ENCODE measurements at regions of chr11 and their contacts with region 1.

Region 1: DNA sequence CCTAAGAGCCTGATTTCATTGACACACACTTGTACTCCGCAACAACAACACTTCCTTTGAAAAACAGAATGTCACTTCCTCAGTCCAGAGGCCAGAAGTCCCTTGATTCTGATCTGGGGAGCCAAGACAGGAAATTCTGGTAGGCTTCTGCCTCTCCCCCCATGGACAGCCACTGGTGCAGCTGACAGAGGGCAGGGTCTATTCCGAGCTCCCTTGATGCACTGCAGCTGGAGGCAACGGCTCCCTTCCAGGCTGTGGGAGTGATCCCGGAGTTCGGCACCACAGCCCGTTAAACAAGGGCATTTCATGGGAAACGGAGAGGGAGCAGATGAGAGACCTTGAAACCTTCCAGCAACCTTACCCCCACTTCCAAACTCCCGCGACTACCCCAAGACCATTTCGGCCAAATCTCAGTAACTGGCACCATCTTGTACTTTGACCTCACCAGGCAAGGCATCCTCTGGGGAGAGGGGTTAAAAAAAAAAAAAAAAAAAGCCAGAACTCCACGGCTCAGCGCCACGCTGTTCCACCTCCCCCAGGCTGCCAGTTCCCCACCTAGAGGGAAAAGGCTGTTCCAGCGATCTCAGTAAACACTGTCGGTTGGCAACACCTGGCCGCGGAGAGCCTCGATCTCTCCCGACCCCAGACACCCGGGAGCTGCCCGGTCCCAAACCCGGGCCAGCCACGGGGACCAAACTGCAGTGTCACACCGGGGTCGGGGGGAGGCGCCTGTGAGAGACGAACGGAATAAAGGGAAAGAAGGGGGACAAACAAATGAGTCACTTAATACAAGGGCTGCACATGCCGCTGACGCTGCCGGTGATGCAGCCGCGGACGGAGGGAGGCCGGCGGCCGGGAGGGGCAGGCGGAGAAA is 1.1 kb downstream of the GAB2 start:
- DNase-seq: peak; percentile 89
- H3K4me3 Mint-ChIP-seq: peak overlapping the region; percentile 80
- H3K27ac Mint-ChIP-seq: peak overlapping the region; percentile 52
- H3K4me1 Mint-ChIP-seq: peaks cover 28% of the 10 kb centered on the region
- H3K27me3 Mint-ChIP-seq: peaks cover 19% of the 10 kb centered on the region

Region 2: DNA sequence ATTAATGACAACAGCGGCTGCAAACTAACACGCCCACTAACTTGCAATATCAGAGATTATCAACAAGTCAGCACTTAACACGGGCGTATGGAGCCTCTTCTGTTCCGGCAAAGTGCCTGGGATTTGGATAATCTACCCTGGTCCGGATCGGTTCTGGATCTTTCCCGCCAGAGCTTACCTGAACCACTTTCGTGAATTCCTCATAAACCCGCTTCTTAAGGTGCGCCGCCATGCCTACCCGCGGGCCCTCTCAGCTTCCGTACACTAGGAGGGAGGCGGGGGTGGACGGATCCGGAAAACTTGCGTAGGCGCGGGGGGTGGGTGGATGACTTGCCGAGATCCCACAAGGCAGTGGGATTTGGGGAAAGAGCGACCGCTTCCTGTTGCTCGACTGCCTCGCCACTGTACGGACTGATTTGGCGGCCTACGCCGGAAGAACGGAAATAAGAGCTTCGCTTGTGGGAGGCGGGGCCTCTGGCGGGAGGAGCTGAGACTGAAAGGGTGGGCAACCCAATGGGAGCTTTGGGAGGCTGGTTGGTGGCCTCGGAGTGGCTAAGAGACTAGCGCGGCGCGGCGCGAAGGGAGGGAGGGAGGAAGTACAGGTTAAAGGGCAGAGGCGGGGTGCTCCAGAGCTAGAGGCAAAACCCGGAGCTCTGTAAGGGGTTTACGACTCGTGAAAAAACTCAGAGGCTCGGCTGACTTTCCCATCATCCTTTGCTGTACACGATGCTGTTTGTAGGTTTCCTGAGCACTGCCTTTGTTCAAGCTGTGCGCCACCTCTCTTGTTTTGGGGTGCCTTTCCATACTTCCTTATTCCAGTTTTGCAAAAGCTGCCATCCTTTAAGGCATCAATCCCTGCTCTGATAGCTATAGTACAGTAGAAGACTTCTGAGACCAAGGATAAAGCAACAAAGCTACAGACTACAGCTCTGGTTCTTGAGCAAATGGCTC is 421.9 kb before region 1 on chr11 and contains the start of gene INTS4:
- CTCF ChIA-PET with region 1: interaction called, 3 read pairs
- POLR2A ChIA-PET with region 1: interaction called, 3 read pairs
- intact Hi-C with region 1: loop called (anchors 5 kb)
- DNase-seq: peak; percentile 99
- H3K4me3 Mint-ChIP-seq: peak within 1 kb of the TSS; percentile 89
- H3K27ac Mint-ChIP-seq: peak within 1 kb of the TSS; percentile 93
- H3K4me1 Mint-ChIP-seq: peaks cover 27% of the 10 kb centered on the region
- H3K27me3 Mint-ChIP-seq: no peaks in the 10 kb centered on the region
- total RNA-seq, gene INTS4: 53.5 to 55.3 TPM

Region 3: GRCh38 chr11:78139422-78140391 is 276.8 kb before region 1 on chr11 and contains the start of gene ALG8:
- CTCF ChIA-PET with region 1: interaction called, 8 read pairs
- POLR2A ChIA-PET with region 1: no interaction called
- intact Hi-C with region 1: loop called (anchors 5 kb)
- DNase-seq: peak; percentile 98
- H3K4me3 Mint-ChIP-seq: peak within 1 kb of the TSS; percentile 81
- H3K27ac Mint-ChIP-seq: peak within 1 kb of the TSS; percentile 93
- H3K4me1 Mint-ChIP-seq: peaks cover 34% of the 10 kb centered on the region
- H3K27me3 Mint-ChIP-seq: no peaks in the 10 kb centered on the region
- total RNA-seq, gene ALG8: 45.8 to 45.9 TPM

Region 4: GRCh38 chr11:78228467-78228866 is 188.1 kb before region 1 on chr11:
- CTCF ChIA-PET with region 1: interaction called, 13 read pairs
- POLR2A ChIA-PET with region 1: no interaction called
- intact Hi-C with region 1: loop called (anchors 2 kb)
- DNase-seq: peak; percentile 20
- H3K4me3 Mint-ChIP-seq: no peak overlapping the region
- H3K27ac Mint-ChIP-seq: no peak overlapping the region
- H3K4me1 Mint-ChIP-seq: peaks cover 15% of the 10 kb centered on the region
- H3K27me3 Mint-ChIP-seq: no peaks in the 10 kb centered on the region

Region 5: DNA sequence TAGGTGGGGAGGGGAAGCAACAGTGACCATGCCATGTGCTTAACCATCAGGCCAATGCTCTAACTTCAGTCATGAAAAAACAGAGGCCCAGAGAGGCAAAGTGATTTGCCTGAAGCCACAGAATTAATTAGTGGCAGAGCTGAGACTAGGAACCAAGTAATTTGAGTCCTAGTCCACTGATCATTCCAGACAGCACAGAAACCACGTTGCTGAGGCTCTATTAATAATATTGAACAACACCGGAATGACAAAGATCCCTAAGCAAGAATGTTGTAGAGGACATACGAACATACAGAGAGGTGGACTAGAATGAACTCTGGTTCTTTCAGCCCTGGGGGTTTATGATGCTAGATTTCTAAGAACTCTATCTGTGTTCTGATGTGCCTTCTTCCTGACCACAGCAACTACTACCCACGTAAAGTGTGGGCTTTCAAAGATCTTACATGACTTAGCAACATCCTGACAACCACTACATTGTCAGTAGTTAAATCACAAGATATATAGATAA is 91.2 kb before region 1 on chr11:
- CTCF ChIA-PET with region 1: no interaction called
- POLR2A ChIA-PET with region 1: no interaction called
- intact Hi-C with region 1: loop called (anchors 5 kb)
- DNase-seq: peak; percentile 16
- H3K4me3 Mint-ChIP-seq: no peak overlapping the region
- H3K27ac Mint-ChIP-seq: peak overlapping the region; percentile 77
- H3K4me1 Mint-ChIP-seq: peaks cover 40% of the 10 kb centered on the region
- H3K27me3 Mint-ChIP-seq: no peaks in the 10 kb centered on the region

Region 6: GRCh38 chr11:78349624-78350023 is 66.9 kb before region 1 on chr11:
- CTCF ChIA-PET with region 1: no interaction called
- POLR2A ChIA-PET with region 1: no interaction called
- intact Hi-C with region 1: no loop called
- DNase-seq: no peak
- H3K4me3 Mint-ChIP-seq: no peak overlapping the region
- H3K27ac Mint-ChIP-seq: no peak overlapping the region
- H3K4me1 Mint-ChIP-seq: peaks cover 17% of the 10 kb centered on the region
- H3K27me3 Mint-ChIP-seq: peaks cover 1% of the 10 kb centered on the region

Region 7: DNA sequence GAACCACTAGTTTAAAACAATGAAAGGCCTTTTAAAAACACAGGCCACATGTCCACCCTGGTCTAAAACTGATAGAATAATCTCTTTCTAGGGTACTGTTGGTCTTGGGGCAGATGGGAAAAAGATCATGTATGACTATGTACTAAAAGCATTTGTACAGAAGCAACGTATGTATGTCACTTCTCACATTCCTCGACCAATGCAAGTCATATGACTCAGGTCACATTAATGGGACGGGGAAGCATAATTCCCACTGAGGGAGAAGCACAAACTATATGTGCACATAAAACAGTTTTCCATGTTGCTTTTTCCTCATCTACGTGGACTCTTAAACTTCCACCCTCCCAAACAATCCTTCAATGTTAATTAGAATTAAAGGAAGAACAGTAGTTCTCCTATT is 33.3 kb after region 1 on chr11:
- CTCF ChIA-PET with region 1: no interaction called
- POLR2A ChIA-PET with region 1: no interaction called
- intact Hi-C with region 1: no loop called
- DNase-seq: no peak
- H3K4me3 Mint-ChIP-seq: no peak overlapping the region
- H3K27ac Mint-ChIP-seq: no peak overlapping the region
- H3K4me1 Mint-ChIP-seq: peaks cover 9% of the 10 kb centered on the region
- H3K27me3 Mint-ChIP-seq: no peaks in the 10 kb centered on the region

Region 8: GRCh38 chr11:78564490-78565467 is 148.2 kb after region 1 on chr11:
- CTCF ChIA-PET with region 1: interaction called, 97 read pairs
- POLR2A ChIA-PET with region 1: no interaction called
- intact Hi-C with region 1: loop called (anchors 1 kb)
- DNase-seq: no peak
- H3K4me3 Mint-ChIP-seq: no peak overlapping the region
- H3K27ac Mint-ChIP-seq: no peak overlapping the region
- H3K4me1 Mint-ChIP-seq: peaks cover 28% of the 10 kb centered on the region
- H3K27me3 Mint-ChIP-seq: no peaks in the 10 kb centered on the region